ENCODE measurements at regions of chrX and their contacts with region 1.

Region 1: GRCh38 chrX:50107470-50107869 is 93.3 kb downstream of the AKAP4 start:
- DNase-seq: no peak
- H3K4me3 Mint-ChIP-seq: no peak overlapping the region
- H3K27ac Mint-ChIP-seq: peak overlapping the region; percentile 41
- H3K4me1 Mint-ChIP-seq: peaks cover 53% of the 10 kb centered on the region
- H3K27me3 Mint-ChIP-seq: no peaks in the 10 kb centered on the region
- CTCF ChIP-seq: no peak

Region 2: GRCh38 chrX:49767236-49767635 is 340.2 kb before region 1 on chrX:
- CTCF ChIA-PET with region 1: no interaction called
- intact Hi-C with region 1: no loop called
- DNase-seq: no peak
- H3K4me3 Mint-ChIP-seq: no peak overlapping the region
- H3K27ac Mint-ChIP-seq: no peak overlapping the region
- H3K4me1 Mint-ChIP-seq: peaks cover 4% of the 10 kb centered on the region
- H3K27me3 Mint-ChIP-seq: peaks cover 34% of the 10 kb centered on the region
- CTCF ChIP-seq: no peak

Region 3: DNA sequence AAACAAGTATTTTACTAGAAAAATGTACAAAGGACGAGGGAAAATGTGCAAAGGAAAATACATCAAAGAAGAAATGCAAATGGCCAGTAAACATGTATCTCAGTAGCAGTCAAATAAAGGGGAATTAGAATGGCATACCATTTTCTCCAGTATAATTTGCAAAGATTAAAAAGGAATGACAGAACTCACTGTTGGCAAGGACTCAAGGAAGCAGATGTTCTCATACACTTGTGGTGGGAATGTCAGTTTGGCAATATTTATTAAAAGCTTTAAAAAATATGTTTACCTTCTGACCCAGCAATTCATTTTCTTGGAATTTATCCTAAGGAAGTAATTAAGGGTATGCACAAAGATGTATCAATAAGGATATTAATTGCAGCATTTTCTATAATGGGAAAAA is 177.4 kb before region 1 on chrX:
- CTCF ChIA-PET with region 1: no interaction called
- intact Hi-C with region 1: no loop called
- DNase-seq: no peak
- H3K4me3 Mint-ChIP-seq: no peak overlapping the region
- H3K27ac Mint-ChIP-seq: no peak overlapping the region
- H3K4me1 Mint-ChIP-seq: peaks cover 36% of the 10 kb centered on the region
- H3K27me3 Mint-ChIP-seq: no peaks in the 10 kb centered on the region
- CTCF ChIP-seq: no peak

Region 4: DNA sequence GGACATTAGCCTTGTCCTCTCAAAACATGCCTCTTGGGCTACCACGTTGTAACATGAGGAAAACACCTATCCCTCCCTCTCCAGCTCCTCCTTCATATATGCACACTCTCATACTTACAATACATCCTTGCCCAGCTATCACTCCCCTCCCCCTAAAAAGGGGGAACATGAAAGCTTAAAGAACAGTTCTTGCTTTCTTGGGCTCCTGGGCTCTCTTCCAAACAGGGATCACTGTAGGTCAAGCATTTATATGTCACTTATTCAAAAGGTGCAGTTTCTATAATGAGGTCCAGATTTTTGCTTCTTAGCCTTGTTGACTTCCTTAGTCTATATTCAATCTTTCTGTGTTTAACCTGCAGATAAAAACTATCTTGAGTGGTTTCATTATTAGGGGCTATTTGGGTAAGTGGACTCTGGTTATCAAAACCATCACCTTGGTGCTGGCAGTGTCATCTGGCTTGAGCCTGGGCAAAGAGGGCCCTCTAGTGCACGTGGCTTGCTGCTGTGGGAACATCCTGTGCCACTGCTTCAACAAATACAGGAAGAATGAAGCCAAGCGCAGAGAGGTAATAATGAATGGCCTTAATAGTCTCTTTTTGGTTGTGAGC is 26.1 kb before region 1 on chrX:
- CTCF ChIA-PET with region 1: no interaction called
- intact Hi-C with region 1: no loop called
- DNase-seq: peak; percentile 54
- H3K4me3 Mint-ChIP-seq: no peak overlapping the region
- H3K27ac Mint-ChIP-seq: peak overlapping the region; percentile 62
- H3K4me1 Mint-ChIP-seq: peaks cover 11% of the 10 kb centered on the region
- H3K27me3 Mint-ChIP-seq: no peaks in the 10 kb centered on the region
- CTCF ChIP-seq: no peak

Region 5: GRCh38 chrX:50152456-50152855 is 45.0 kb after region 1 on chrX:
- CTCF ChIA-PET with region 1: no interaction called
- intact Hi-C with region 1: loop called (anchors 5 kb)
- DNase-seq: no peak
- H3K4me3 Mint-ChIP-seq: no peak overlapping the region
- H3K27ac Mint-ChIP-seq: no peak overlapping the region
- H3K4me1 Mint-ChIP-seq: peaks cover 38% of the 10 kb centered on the region
- H3K27me3 Mint-ChIP-seq: no peaks in the 10 kb centered on the region
- CTCF ChIP-seq: no peak